ENCODE measurements at regions of chr19 and their contacts with region 1.

Region 1: GRCh38 chr19:48795055-48795684 is 15.7 kb downstream of the BCAT2 start:
- DNase-seq: peak; percentile 86 to 87 (median 86)
- H3K4me3 ChIP-seq: peak overlapping the region; percentile 48 to 78
- H3K4me3 Mint-ChIP-seq: peak overlapping the region; percentile 94 to 98 (median 95)
- H3K27ac ChIP-seq: peak overlapping the region; percentile 70
- H3K27ac Mint-ChIP-seq: peak overlapping the region; percentile 64 to 97 (median 96)
- H3K4me1 ChIP-seq: peaks cover 5% of the 10 kb centered on the region
- H3K4me1 Mint-ChIP-seq: peaks cover 4 to 16% (median 6%) of the 10 kb centered on the region in 4 donors
- H3K27me3 ChIP-seq: no peaks in the 10 kb centered on the region
- H3K27me3 Mint-ChIP-seq: no peaks in the 10 kb centered on the region

Region 2: GRCh38 chr19:48403606-48404005 is 391.6 kb before region 1 on chr19:
- CTCF ChIA-PET with region 1: no interaction called
- POLR2A ChIA-PET with region 1: no interaction called
- intact Hi-C with region 1: no loop called
- DNase-seq: peak; percentile 32 to 65 (median 47)
- H3K4me3 ChIP-seq: no peak overlapping the region
- H3K4me3 Mint-ChIP-seq: no peak overlapping the region
- H3K27ac ChIP-seq: no peak overlapping the region
- H3K27ac Mint-ChIP-seq: peak overlapping the region in 2 of 7 donors; percentile 24 to 62
- H3K4me1 ChIP-seq: no peaks in the 10 kb centered on the region
- H3K4me1 Mint-ChIP-seq: peaks cover 8 to 31% (median 16%) of the 10 kb centered on the region in 4 donors
- H3K27me3 ChIP-seq: no peaks in the 10 kb centered on the region
- H3K27me3 Mint-ChIP-seq: peaks cover 2 to 7% of the 10 kb centered on the region in 2 donors

Region 3: DNA sequence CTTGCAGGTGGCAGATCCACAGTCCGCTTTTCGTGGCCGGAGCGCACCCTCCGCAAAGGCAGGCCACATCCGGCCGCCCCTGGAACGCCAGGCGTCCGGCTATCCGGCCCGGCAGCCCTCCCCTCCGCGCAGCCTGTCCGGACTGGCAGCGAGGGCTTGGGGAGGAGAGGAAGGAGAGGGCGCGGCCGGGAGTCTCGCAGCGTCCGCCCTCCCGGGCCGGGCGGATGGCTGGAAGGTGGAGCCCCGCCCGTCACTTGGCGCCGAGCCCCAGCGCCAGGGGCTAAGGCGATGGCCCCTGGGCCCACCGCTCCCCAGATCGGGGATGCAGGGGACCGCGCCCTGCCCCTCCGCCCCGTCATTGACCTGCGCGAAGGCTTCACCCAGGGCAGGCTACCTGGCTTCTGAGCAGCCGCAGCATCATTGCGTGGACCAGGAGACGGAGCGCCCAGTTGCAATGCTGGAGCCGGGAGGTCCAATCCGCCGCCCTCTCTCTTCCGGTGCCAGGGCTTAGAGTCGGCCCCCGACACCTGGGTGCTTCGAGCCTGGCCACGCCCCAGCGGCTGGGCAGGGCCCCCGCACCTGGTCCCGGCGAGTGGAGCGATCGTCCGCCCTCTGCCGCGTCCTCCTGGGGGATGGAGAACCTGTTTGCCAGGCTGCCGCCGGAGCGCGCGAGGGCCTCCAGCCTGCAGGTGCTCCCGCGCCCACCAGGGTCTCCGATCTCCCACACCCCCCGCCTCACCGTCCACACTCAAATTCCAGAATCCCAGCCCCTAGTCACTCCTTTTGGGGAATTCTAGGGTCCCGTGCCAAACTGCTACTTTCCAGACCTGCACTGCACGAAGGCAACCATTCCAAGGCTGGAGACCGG is 42.4 kb before region 1 on chr19 and contains the start of gene FUT1:
- CTCF ChIA-PET with region 1: no interaction called
- POLR2A ChIA-PET with region 1: no interaction called
- intact Hi-C with region 1: no loop called
- DNase-seq: peak; percentile 29 to 60 (median 35)
- H3K4me3 ChIP-seq: peak within 1 kb of the TSS; percentile 11 to 45
- H3K4me3 Mint-ChIP-seq: peak within 1 kb of the TSS; percentile 83 to 91 (median 86)
- H3K27ac ChIP-seq: no peak within 1 kb of the TSS
- H3K27ac Mint-ChIP-seq: peak within 1 kb of the TSS; percentile 4 to 89 (median 70)
- H3K4me1 ChIP-seq: peaks cover 18% of the 10 kb centered on the region
- H3K4me1 Mint-ChIP-seq: peaks cover 13 to 25% (median 19%) of the 10 kb centered on the region in 4 donors
- H3K27me3 ChIP-seq: no peaks in the 10 kb centered on the region
- H3K27me3 Mint-ChIP-seq: peaks cover 6 to 11% of the 10 kb centered on the region in 2 donors
- total RNA-seq, gene FUT1: 0.22 to 0.32 TPM

Region 4: GRCh38 chr19:48784540-48784939 is 10.6 kb before region 1 on chr19:
- CTCF ChIA-PET with region 1: interaction called, 11 read pairs
- POLR2A ChIA-PET with region 1: interaction called, 3 read pairs
- intact Hi-C with region 1: no loop called
- DNase-seq: no peak
- H3K4me3 ChIP-seq: no peak overlapping the region
- H3K4me3 Mint-ChIP-seq: peak overlapping the region in 1 of 8 donors; percentile 17
- H3K27ac ChIP-seq: no peak overlapping the region
- H3K27ac Mint-ChIP-seq: no peak overlapping the region
- H3K4me1 ChIP-seq: no peaks in the 10 kb centered on the region
- H3K4me1 Mint-ChIP-seq: peaks cover 0 to 5% (median 4%) of the 10 kb centered on the region in 4 donors
- H3K27me3 ChIP-seq: no peaks in the 10 kb centered on the region
- H3K27me3 Mint-ChIP-seq: peaks cover 10 to 14% of the 10 kb centered on the region in 2 donors

Region 5: DNA sequence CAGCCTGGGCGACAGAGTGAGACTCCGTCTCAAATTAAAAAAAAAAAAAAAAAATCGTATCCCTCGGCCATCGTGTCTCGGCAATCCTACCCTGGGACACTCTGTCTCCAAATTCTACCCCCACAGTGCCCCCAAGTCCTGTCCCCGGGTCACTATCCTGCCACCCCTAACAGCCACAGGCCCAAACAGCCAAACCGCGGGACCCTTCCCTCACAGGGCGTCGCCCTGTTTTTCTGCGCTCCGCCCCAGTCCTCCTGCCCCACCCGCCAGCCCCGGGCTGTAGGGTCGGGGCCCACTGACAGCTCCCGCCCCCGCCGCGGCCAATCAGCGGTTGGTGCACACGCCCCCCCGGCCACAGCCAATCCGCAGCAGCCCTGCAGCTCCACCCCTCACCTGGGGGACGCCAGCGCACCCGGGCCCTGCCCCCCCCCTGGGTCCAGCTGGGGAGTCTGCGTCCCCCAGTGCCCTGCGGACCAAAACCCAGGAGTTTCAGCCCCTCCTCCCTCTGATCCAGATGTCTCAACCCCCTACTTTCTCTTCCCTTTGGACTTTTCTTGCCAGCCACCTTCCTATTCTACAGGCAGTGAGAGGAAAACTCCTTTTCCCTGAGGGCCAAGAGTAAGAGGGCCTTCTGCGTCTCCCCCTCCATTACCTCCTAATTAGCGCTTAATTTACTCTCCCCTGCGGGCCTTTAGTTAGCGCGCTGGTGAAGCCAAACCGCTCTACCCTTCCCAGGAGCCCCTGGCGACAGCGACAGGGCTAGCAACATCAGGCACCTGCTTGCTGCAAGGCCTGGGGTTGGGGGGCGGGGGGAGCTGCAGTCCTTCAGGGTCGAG is 17.1 kb after region 1 on chr19:
- CTCF ChIA-PET with region 1: interaction called, 18 read pairs
- POLR2A ChIA-PET with region 1: interaction called, 13 read pairs
- intact Hi-C with region 1: loop called (anchors 1 kb)
- DNase-seq: peak; percentile 48 to 55 (median 50)
- H3K4me3 ChIP-seq: no peak overlapping the region
- H3K4me3 Mint-ChIP-seq: peak overlapping the region; percentile 79 to 87 (median 84)
- H3K27ac ChIP-seq: no peak overlapping the region
- H3K27ac Mint-ChIP-seq: peak overlapping the region in 6 of 7 donors; percentile 10 to 91 (median 80)
- H3K4me1 ChIP-seq: peaks cover 13% of the 10 kb centered on the region
- H3K4me1 Mint-ChIP-seq: peaks cover 21 to 51% (median 36%) of the 10 kb centered on the region in 4 donors
- H3K27me3 ChIP-seq: no peaks in the 10 kb centered on the region
- H3K27me3 Mint-ChIP-seq: no peaks in the 10 kb centered on the region

Region 6: DNA sequence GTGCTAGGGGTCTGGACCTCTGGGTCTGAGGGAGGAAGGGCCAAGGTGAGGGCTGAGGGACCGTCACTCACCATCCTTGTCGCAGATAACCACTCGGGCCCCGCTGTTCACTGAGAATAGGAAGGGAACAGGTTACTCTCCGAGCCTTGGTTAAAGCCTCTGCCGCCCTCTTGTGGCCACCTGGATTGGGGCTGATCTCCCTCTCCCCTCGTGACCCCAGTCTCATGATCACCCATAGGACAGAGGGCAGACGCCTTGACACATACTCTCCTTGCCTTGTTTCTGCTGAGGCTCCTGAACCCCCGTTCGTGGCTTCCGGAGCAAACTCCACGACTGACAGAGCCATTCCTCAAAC is 40.5 kb after region 1 on chr19:
- CTCF ChIA-PET with region 1: interaction called, 140 read pairs
- POLR2A ChIA-PET with region 1: interaction called, 3 read pairs
- intact Hi-C with region 1: loop called (anchors 1 kb)
- DNase-seq: peak; percentile 87 to 91 (median 89)
- H3K4me3 ChIP-seq: peak overlapping the region in 1 of 2 donors; percentile 51
- H3K4me3 Mint-ChIP-seq: peak overlapping the region; percentile 77 to 91 (median 84)
- H3K27ac ChIP-seq: no peak overlapping the region
- H3K27ac Mint-ChIP-seq: peak overlapping the region in 6 of 7 donors; percentile 68 to 92 (median 86)
- H3K4me1 ChIP-seq: peaks cover 21% of the 10 kb centered on the region
- H3K4me1 Mint-ChIP-seq: peaks cover 15 to 21% (median 16%) of the 10 kb centered on the region in 4 donors
- H3K27me3 ChIP-seq: no peaks in the 10 kb centered on the region
- H3K27me3 Mint-ChIP-seq: peaks cover 4 to 14% of the 10 kb centered on the region in 2 donors

Region 7: GRCh38 chr19:48965040-48965805 is 170.1 kb after region 1 on chr19 and contains the start of gene FTL:
- CTCF ChIA-PET with region 1: interaction called, 71 read pairs
- POLR2A ChIA-PET with region 1: interaction called, 20 read pairs
- intact Hi-C with region 1: no loop called
- DNase-seq: peak; percentile 81 to 87 (median 85)
- H3K4me3 ChIP-seq: peak within 1 kb of the TSS; percentile 84 to 91
- H3K4me3 Mint-ChIP-seq: peak within 1 kb of the TSS; percentile 93 to 100 (median 96)
- H3K27ac ChIP-seq: peak within 1 kb of the TSS; percentile 64
- H3K27ac Mint-ChIP-seq: peak within 1 kb of the TSS; percentile 96 to 100 (median 97)
- H3K4me1 ChIP-seq: peaks cover 43% of the 10 kb centered on the region
- H3K4me1 Mint-ChIP-seq: peaks cover 30 to 67% (median 46%) of the 10 kb centered on the region in 4 donors
- H3K27me3 ChIP-seq: no peaks in the 10 kb centered on the region
- H3K27me3 Mint-ChIP-seq: no peaks in the 10 kb centered on the region
- total RNA-seq, gene FTL: 1,304 to 1,371 TPM

Measured in CD4-positive, alpha-beta memory T cell (primary cell).